Activated CD4-positive, alpha-beta memory T cell treated with anti-CD3 and anti-CD28 coated beads for 36 hours (primary cell): ENCODE measurements at regions of chr10 and their contacts with region 1.

Region 1: GRCh38 chr10:14536241-14537213 is 205.8 kb upstream of the FRMD4A start:
- DNase-seq: peak; percentile 67
- H3K4me3 Mint-ChIP-seq: no peak overlapping the region
- H3K27ac Mint-ChIP-seq: peak overlapping the region; percentile 19
- H3K4me1 Mint-ChIP-seq: peaks cover 83% of the 10 kb centered on the region
- H3K27me3 Mint-ChIP-seq: no peaks in the 10 kb centered on the region

Region 2: DNA sequence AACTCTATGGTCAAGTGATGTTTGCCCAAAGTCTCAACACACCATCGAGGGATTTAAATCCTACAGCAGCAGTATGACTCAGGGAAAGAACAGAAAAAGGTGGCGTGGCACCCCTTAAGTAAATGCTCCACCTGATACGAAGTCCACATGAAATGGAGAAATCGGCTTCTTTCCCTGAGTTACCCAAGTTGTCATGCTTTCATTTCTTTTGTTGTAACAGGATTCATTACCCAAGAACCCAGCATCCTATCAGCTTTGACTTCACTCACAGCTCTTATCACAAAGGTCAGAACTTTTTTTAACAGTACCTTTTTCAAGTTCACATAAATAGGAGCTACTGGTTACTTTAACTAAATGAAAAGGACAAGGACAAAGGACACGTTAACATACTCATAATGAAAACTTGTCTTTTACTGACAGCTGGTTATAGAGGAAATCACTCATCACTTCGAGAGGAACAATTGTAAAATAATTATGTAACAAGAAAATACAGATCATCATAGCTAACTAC is 14.0 kb after region 1 on chr10:
- CTCF ChIA-PET with region 1: interaction called, 33 read pairs
- POLR2A ChIA-PET with region 1: interaction called, 3 read pairs
- intact Hi-C with region 1: loop called (anchors 2 kb)
- DNase-seq: no peak
- H3K4me3 Mint-ChIP-seq: no peak overlapping the region
- H3K27ac Mint-ChIP-seq: peak overlapping the region; percentile 78
- H3K4me1 Mint-ChIP-seq: peaks cover 89% of the 10 kb centered on the region
- H3K27me3 Mint-ChIP-seq: no peaks in the 10 kb centered on the region